Heart right ventricle (tissue), 16 donors: ENCODE measurements at regions of chrX and their contacts with region 1.

Region 1: GRCh38 chrX:14095702-14096101 is 66.0 kb upstream of the GEMIN8 start:
- DNase-seq: peak in 1 of 2 donors; percentile 3
- ATAC-seq: peak in 1 of 8 donors; percentile 61
- H3K4me3 ChIP-seq: no peak overlapping the region
- H3K27ac ChIP-seq: no peak overlapping the region
- H3K4me1 ChIP-seq: no peaks in the 10 kb centered on the region
- H3K27me3 ChIP-seq: peaks cover 0 to 34% (median 0%) of the 10 kb centered on the region in 7 donors
- CTCF ChIP-seq: peak; percentile 21 to 70 (median 60)

Region 2: GRCh38 chrX:13932416-13932815 is 163.3 kb before region 1 on chrX:
- intact Hi-C with region 1: no loop called
- DNase-seq: no peak
- ATAC-seq: no peak
- H3K4me3 ChIP-seq: no peak overlapping the region
- H3K27ac ChIP-seq: no peak overlapping the region
- H3K4me1 ChIP-seq: peaks cover 0 to 4% (median 0%) of the 10 kb centered on the region in 9 donors
- H3K27me3 ChIP-seq: peaks cover 0 to 73% (median 0%) of the 10 kb centered on the region in 7 donors
- CTCF ChIP-seq: no peak

Region 3: GRCh38 chrX:14344172-14344940 is 248.7 kb after region 1 on chrX:
- intact Hi-C with region 1: no loop called
- DNase-seq: no peak
- ATAC-seq: no peak
- H3K4me3 ChIP-seq: no peak overlapping the region
- H3K27ac ChIP-seq: no peak overlapping the region
- H3K4me1 ChIP-seq: no peaks in the 10 kb centered on the region
- H3K27me3 ChIP-seq: no peaks in the 10 kb centered on the region
- CTCF ChIP-seq: peak in 1 of 9 donors; percentile 14

Region 4: GRCh38 chrX:14528629-14529289 is 433.1 kb after region 1 on chrX:
- intact Hi-C with region 1: loop called in 3 of 10 experiments (anchors 10 kb)
- DNase-seq: peak; percentile 20 to 31
- ATAC-seq: no peak
- H3K4me3 ChIP-seq: no peak overlapping the region
- H3K27ac ChIP-seq: no peak overlapping the region
- H3K4me1 ChIP-seq: no peaks in the 10 kb centered on the region
- H3K27me3 ChIP-seq: peaks cover 0 to 36% (median 0%) of the 10 kb centered on the region in 7 donors
- CTCF ChIP-seq: peak in 7 of 9 donors; percentile 20 to 53 (median 40)

Region 5: DNA sequence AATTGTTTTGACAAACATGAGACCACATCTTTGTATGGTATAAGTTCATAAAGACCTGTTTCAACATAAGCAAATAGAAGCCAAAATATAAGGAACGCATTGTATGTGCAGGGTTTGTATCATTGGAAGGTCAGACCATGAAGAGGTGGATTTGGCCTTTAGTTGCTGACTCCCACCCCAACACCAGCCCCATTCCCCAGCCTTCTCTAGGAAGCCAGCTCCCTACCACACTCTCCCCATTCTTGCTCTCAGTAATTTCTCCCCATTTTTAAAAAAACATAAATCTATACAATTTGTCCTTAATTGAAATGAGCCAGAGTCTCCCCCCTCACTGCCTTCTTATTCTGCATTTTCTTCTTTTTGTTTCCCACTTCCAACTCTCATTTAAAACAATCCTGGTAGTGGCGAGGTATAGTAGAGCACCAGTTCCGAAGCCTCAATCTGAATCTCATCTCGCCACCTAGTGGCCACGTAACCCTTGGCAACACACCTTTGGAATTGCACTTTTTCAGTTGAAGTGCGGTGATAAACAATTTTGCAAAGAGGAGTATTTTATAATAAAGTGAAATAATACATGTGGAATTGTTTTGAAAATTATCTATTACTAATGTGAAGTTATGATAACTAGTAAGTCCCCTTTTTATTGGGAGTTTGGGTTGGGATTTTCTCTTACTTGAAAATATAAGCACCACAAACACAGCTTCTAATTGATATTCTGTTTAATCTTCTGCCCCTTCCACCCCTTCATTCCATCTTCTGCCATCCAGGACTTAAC is 1047.5 kb after region 1 on chrX:
- intact Hi-C with region 1: loop called in 5 of 10 experiments (anchors 2 to 10 kb)
- DNase-seq: peak; percentile 11 to 15
- ATAC-seq: peak in 2 of 8 donors; percentile 42 to 43
- H3K4me3 ChIP-seq: no peak overlapping the region
- H3K27ac ChIP-seq: no peak overlapping the region
- H3K4me1 ChIP-seq: no peaks in the 10 kb centered on the region
- H3K27me3 ChIP-seq: peaks cover 0 to 50% (median 0%) of the 10 kb centered on the region in 7 donors
- CTCF ChIP-seq: peak; percentile 19 to 69 (median 64)

Region 6: DNA sequence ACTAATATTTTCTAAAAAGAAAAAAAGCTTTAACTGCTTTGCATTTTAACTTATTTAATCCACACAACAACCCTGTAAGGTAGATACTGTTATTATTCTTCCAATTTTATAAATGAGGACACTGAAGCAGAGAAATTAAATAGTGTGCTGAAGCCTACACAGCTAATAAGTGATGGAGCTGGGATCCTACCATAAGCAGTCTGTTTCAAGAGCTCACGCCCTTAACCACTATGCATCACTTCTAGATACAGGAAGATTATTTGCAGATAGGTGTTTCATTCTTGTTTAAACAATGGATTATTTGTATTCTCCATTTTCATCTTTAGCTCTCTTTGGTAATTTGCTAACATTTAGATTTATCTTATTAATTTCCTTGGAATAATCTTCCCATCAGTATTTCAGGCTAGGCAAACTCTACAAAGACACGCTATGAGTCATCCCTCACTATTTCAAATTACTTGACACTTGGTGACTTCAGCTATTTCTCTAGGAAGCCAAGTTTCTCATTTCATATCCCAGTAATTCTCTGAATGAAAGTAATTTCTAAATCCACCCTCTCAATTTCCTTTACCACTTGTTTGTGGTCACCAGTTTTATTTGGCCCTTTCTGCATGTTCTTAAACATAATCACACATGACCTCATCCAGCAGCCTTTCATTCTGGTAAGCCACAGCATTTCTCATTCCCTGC is 1106.9 kb after region 1 on chrX:
- intact Hi-C with region 1: no loop called
- DNase-seq: no peak
- ATAC-seq: no peak
- H3K4me3 ChIP-seq: no peak overlapping the region
- H3K27ac ChIP-seq: no peak overlapping the region
- H3K4me1 ChIP-seq: no peaks in the 10 kb centered on the region
- H3K27me3 ChIP-seq: peaks cover 0 to 4% (median 0%) of the 10 kb centered on the region in 7 donors
- CTCF ChIP-seq: no peak

Region 7: GRCh38 chrX:15242899-15243555 is 1147.3 kb after region 1 on chrX:
- intact Hi-C with region 1: loop called in 3 of 10 experiments (anchors 5 to 10 kb)
- DNase-seq: peak in 1 of 2 donors; percentile 4
- ATAC-seq: no peak
- H3K4me3 ChIP-seq: no peak overlapping the region
- H3K27ac ChIP-seq: no peak overlapping the region
- H3K4me1 ChIP-seq: no peaks in the 10 kb centered on the region
- H3K27me3 ChIP-seq: peaks cover 0 to 40% (median 0%) of the 10 kb centered on the region in 7 donors
- CTCF ChIP-seq: peak in 8 of 9 donors; percentile 16 to 68 (median 54)